ENCODE measurements at regions of chr1 and their contacts with region 1.

Region 1: DNA sequence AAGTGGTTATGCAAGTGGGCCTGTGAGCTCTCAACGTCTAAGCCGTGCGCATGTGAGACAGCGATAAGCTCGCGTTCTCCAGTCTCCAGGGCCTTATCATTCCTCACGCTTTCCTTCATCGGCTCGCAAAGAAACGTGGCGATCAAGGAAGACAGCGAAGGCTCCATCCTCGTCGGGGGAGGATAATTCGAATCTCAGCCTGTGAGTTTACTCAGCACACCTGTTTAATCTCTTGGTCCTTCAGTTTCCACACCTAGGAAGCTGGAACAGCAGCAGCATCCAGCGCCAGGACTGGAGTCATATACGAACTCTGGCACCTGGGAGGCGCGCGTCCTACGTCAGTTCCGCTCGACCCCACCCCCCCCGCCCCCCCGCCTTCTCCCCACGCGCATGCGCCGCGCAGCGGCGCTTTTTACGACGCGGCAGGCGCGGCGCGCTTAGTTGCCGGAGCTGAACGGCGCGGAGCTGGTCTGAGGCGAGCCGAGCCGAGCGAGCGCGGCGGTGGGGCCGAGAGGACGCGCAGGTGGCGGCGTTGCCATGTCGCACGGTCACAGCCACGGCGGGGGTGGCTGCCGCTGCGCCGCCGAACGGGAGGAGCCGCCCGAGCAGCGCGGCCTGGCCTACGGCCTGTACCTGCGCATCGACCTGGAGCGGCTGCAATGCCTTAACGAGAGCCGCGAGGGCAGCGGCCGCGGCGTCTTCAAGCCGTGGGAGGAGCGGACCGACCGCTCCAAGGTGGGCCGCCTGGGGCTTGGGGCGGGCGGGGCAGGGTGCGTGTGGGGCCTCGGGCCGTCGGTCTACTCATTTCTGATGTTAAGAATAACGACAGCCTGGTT is at the start of gene PITHD1:
- DNase-seq: peak; percentile 95
- H3K4me3 Mint-ChIP-seq: peak within 1 kb of the TSS; percentile 88
- H3K27ac Mint-ChIP-seq: peak within 1 kb of the TSS; percentile 86
- H3K4me1 Mint-ChIP-seq: peaks cover 30% of the 10 kb centered on the region
- H3K27me3 Mint-ChIP-seq: no peaks in the 10 kb centered on the region
- total RNA-seq, gene PITHD1: 83.0 and 88.6 TPM in 2 replicates

Region 2: DNA sequence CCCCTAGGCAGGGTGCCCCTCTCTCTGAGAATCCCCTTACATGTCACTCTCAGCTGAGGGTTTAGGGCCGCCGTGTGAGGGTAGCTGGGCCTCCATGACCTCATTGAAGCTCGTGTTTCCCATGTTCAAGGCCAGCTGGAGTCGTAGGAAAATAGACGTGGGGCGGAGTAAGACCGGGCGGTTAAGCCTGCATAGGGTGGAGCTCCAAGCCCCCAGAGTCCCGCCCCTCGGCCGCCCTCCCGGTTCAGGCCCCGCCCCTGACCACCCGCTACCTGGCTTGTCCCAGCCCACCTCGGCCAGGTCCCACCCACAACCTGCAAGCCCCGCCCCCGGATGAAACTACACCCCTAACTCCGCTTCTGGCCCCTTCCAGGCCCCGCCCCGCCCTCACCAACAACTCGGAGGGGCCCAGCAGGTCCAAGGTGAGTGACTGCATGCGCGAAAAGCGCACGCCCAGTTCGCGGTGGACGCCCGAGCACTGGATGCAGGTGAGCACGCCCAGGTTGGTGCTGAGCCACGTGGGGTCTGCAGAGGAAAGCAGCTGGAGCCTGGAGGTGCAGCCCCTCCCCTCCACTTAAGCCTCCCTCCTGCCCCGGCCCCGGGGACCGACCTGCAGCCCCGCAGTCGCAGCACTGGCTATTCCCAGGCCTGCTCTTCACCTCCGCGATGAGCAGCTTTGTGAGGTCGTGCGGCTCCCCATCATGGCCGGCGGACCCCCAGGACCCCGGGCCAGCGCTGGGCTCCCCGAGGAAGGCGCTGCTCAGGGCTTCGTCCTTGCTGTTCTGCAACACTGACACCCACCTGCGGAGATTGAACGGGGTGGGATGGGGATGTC is 341.5 kb before region 1 on chr1:
- intact Hi-C with region 1: no loop called
- DNase-seq: peak; percentile 64
- H3K4me3 Mint-ChIP-seq: no peak overlapping the region
- H3K27ac Mint-ChIP-seq: no peak overlapping the region
- H3K4me1 Mint-ChIP-seq: no peaks in the 10 kb centered on the region
- H3K27me3 Mint-ChIP-seq: peaks cover 8% of the 10 kb centered on the region

Region 3: DNA sequence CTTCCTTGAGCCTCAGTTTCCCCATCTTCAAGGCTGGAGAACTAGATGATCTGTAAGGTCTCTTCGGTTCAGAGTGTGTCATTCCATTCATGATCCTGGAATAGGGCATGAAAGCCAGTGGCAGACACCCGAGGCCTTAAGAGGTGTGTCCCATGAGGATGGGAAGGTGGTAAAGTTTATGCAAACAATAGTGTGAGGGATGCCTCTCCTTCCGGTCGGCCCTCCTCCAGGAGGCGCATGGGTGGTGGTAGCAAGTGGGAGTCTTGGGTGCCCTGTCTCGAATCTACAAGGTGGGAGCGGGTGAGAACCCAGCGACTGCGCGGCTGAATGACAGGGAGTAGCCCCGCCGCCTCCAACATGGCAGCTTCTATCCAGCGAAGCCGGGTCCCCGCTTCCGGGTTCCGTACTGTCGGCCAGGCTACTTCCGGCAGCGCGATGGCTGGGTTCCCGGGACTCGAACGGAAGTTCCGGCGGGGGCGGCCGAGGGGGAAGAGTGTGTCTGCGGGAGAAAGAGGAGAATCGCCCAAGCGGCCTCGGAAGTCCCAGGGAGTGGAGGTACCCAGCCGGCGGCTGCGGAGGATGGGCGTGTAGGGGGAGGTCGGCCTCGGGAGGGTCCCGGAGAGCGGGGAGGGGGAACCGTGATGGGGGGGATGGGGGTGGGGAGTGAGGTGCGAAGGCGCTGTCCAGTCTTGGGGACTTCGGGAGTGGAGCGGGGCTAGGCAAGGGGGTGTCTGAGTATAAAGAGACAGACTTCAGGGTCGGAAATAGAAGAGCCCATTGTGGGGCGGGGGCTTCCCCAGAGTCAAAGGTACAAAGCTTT is 12.7 kb after region 1 on chr1 and contains the start of gene LYPLA2:
- intact Hi-C with region 1: loop called (anchors 1 kb)
- DNase-seq: peak; percentile 97
- H3K4me3 Mint-ChIP-seq: peak within 1 kb of the TSS; percentile 92
- H3K27ac Mint-ChIP-seq: peak within 1 kb of the TSS; percentile 91
- H3K4me1 Mint-ChIP-seq: peaks cover 23% of the 10 kb centered on the region
- H3K27me3 Mint-ChIP-seq: no peaks in the 10 kb centered on the region
- total RNA-seq, gene LYPLA2: 86.2 and 92.4 TPM in 2 replicates

Region 4: DNA sequence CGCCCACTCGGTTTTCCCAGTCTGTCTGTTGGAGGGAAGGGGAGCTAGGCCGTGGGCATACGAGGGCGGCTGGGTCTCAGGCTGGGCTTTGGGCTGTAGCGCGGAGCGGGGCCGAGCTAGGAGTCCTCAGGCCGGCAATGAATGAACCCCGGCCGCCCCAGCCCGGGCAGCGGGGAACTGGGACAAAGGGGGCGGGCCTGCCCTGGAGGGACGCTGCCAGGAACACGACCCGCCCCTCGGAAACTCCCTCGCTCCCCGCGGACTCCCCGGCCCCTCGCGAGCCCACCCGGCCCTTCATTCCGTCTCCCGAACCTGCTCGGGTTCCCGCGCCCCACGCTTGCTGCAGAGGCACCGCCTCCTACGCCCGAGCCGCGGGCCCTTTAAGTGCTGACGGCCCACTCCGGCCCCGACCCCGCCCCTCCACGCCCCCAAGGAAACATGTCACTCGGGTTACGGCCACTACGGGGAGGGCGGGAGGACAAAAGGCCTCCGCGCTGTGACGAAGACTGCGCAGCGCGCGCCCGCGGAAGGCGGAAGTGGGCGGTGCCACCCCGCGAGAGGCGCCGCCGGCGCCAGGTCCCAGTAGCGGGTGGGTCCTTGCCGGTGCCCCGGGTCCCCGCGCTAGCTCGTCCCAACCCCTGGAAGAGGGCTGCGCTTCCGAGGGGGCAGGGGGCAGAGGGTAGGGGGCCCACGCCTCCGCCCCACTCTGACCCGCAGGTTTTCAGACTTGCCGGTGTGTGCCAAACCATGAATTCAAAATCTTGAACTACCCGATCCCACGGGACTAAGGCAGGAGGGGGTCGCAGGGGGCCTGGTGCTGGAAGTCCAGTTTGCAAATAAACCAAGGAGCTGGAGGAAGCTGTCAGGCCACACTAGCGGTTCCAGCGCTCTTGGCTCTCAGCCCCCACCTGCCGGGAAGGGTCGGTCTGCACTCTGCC is 22.5 kb after region 1 on chr1 and contains the start of gene GALE:
- intact Hi-C with region 1: loop called (anchors 1 kb)
- DNase-seq: peak; percentile 98
- H3K4me3 Mint-ChIP-seq: peak within 1 kb of the TSS; percentile 92
- H3K27ac Mint-ChIP-seq: peak within 1 kb of the TSS; percentile 75
- H3K4me1 Mint-ChIP-seq: peaks cover 19% of the 10 kb centered on the region
- H3K27me3 Mint-ChIP-seq: no peaks in the 10 kb centered on the region
- total RNA-seq, gene GALE: 66.3 and 73.5 TPM in 2 replicates